ENCODE measurements at regions of chr14 and their contacts with region 1.

Region 1: GRCh38 chr14:103899833-103900232 is 28.4 kb upstream of the TDRD9 start:
- DNase-seq: no peak
- ATAC-seq: no peak
- H3K4me3 Mint-ChIP-seq: no peak overlapping the region
- H3K27ac Mint-ChIP-seq: no peak overlapping the region
- H3K4me1 Mint-ChIP-seq: peaks cover 5% of the 10 kb centered on the region
- H3K27me3 Mint-ChIP-seq: no peaks in the 10 kb centered on the region
- CTCF ChIP-seq: no peak

Region 2: GRCh38 chr14:102986810-102987579 is 912.8 kb before region 1 on chr14:
- CTCF ChIA-PET with region 1: no interaction called
- POLR2A ChIA-PET with region 1: no interaction called
- intact Hi-C with region 1: no loop called
- DNase-seq: no peak
- ATAC-seq: no peak
- H3K4me3 Mint-ChIP-seq: no peak overlapping the region
- H3K27ac Mint-ChIP-seq: no peak overlapping the region
- H3K4me1 Mint-ChIP-seq: peaks cover 10% of the 10 kb centered on the region
- H3K27me3 Mint-ChIP-seq: no peaks in the 10 kb centered on the region
- CTCF ChIP-seq: no peak

Region 3: DNA sequence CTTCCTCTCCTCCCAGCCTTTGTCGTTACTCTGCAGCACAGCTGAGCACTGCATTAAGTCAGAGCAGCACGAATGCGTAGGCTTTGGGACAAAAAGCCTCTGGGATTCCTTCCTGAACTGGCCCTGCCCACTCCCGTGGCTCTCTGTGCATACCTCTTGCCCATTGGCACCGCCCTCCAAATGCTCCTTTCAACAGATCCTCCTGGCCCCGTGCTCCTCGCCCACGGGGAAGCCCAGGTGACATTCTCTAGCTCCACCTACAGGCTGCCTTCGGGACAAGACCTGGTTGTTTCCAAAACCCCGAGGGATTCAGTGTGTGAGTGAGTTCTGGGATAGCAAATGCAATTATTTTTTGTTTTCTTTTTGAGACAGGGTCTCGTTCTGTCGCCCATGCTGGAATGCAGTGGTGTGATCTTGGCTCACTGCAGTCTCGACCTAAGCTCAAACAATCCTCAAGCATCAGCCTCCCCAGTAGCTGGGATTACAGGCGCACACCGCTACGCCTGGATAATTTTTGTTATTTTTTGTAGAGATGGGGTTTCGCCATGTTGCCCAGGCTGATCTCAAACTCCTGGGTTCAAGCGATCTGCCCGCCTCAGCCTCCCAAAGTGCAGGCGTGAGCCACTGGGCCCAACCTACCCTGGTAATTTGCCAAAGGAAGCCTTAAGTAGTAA is 10.6 kb after region 1 on chr14:
- CTCF ChIA-PET with region 1: interaction called, 10 read pairs
- POLR2A ChIA-PET with region 1: no interaction called
- intact Hi-C with region 1: no loop called
- DNase-seq: peak; percentile 30
- ATAC-seq: peak; percentile 79
- H3K4me3 Mint-ChIP-seq: peak overlapping the region; percentile 33
- H3K27ac Mint-ChIP-seq: no peak overlapping the region
- H3K4me1 Mint-ChIP-seq: peaks cover 7% of the 10 kb centered on the region
- H3K27me3 Mint-ChIP-seq: no peaks in the 10 kb centered on the region
- CTCF ChIP-seq: no peak

Measured in activated B cell treated with CpG ODN at 0.5 μM for 24 hours (primary cell).